Endothelial cell of umbilical vein (primary cell): ENCODE measurements at regions of chr21 and their contacts with region 1.

Region 1: DNA sequence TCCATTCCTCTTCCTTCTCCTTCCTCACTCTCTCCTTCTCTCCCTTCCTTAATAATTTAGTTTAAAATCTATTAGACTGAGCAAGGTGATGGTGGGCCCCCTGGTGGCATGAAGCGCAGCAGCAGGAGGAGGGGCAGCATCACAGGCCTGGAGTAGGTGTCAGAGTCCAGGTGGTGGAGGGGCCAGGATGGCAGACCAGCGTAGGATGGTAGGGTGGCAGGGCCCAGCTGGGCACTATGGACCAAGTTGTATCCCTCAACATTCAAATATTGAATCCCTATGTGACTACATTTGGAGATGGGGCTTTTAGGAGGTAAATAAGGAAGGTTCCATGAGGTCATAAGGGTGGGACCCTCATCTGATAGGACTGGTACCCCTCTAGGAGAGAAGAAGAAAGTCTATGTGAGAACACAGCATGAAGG is 61.0 kb downstream of the WDR4 start:
- DNase-seq: peak; percentile 59
- H3K4me3 ChIP-seq: no peak overlapping the region
- H3K27ac ChIP-seq: no peak overlapping the region
- H3K4me1 ChIP-seq: no peaks in the 10 kb centered on the region
- H3K27me3 ChIP-seq: peaks cover 6 to 14% of the 10 kb centered on the region in 2 experiments
- CTCF ChIP-seq: peak; percentile 77 to 85
- POLR2A ChIP-seq: no peak

Region 2: GRCh38 chr21:42593007-42593806 is 225.1 kb before region 1 on chr21:
- CTCF ChIA-PET with region 1: interaction called, 85 read pairs
- POLR2A ChIA-PET with region 1: no interaction called
- dilution Hi-C with region 1: no loop called
- intact Hi-C with region 1: loop called (anchors 5 kb)
- DNase-seq: peak; percentile 43
- H3K4me3 ChIP-seq: no peak overlapping the region
- H3K27ac ChIP-seq: no peak overlapping the region
- H3K4me1 ChIP-seq: no peaks in the 10 kb centered on the region
- H3K27me3 ChIP-seq: no peaks in the 10 kb centered on the region
- CTCF ChIP-seq: peak; percentile 57 to 87
- POLR2A ChIP-seq: no peak

Region 3: DNA sequence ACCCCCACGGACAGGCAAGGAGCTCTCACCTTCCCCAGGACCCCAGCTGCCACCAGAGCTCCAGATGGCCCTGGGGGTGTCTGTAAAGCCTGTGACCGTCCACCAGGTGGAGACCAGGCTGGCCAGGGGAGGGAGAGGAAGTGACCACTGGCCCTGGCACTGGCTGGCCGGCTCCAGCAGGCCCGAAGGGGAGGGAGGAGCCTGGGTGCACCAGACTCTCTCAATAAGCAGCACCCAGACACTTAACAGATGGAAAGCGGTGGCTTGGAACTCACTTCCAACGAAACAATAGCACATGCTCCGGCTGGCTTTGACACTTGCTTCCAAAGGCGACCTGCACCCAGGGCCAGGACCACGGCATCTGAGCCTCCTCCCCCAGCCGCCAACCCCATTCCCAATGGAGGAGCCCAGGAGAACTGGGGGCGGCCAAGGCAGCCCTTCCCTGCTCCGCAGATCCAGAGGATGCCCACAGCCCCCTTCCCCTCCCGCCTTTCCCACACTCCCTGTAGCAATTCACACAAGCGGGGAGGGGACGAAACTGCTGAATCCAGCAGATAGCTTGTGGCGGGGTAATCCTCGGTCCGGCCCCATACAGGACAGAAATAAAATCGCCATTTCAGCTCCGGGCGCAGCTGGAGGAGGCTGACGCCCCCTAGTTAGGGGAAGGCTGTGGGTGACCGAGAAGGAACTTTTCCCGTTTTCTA is 165.7 kb before region 1 on chr21:
- CTCF ChIA-PET with region 1: interaction called, 18 read pairs
- POLR2A ChIA-PET with region 1: no interaction called
- dilution Hi-C with region 1: no loop called
- intact Hi-C with region 1: loop called (anchors 1 kb)
- DNase-seq: peak; percentile 52
- H3K4me3 ChIP-seq: no peak overlapping the region
- H3K27ac ChIP-seq: no peak overlapping the region
- H3K4me1 ChIP-seq: no peaks in the 10 kb centered on the region
- H3K27me3 ChIP-seq: peaks cover 21 to 25% of the 10 kb centered on the region in 2 experiments
- CTCF ChIP-seq: peak; percentile 57 to 72
- POLR2A ChIP-seq: no peak

Region 4: GRCh38 chr21:42724226-42724920 is 94.0 kb before region 1 on chr21:
- CTCF ChIA-PET with region 1: no interaction called
- POLR2A ChIA-PET with region 1: no interaction called
- dilution Hi-C with region 1: no loop called
- intact Hi-C with region 1: loop called (anchors 10 kb)
- DNase-seq: peak; percentile 7
- H3K4me3 ChIP-seq: no peak overlapping the region
- H3K27ac ChIP-seq: no peak overlapping the region
- H3K4me1 ChIP-seq: peaks cover 24% of the 10 kb centered on the region
- H3K27me3 ChIP-seq: no peaks in the 10 kb centered on the region
- CTCF ChIP-seq: no peak
- POLR2A ChIP-seq: no peak